Psoas muscle (tissue), 8 donors: ENCODE measurements at regions of chr12 and their contacts with region 1.

Region 1: GRCh38 chr12:45728630-45729232 is 775 bp upstream of the ARID2 start:
- DNase-seq: peak; percentile 96 to 98
- ATAC-seq: peak; percentile 79 to 86 (median 83)
- H3K4me3 ChIP-seq: peak overlapping the region; percentile 91
- H3K27ac ChIP-seq: peak overlapping the region; percentile 97
- H3K4me1 ChIP-seq: peaks cover 45% of the 10 kb centered on the region
- H3K27me3 ChIP-seq: no peaks in the 10 kb centered on the region
- CTCF ChIP-seq: peak; percentile 91

Region 2: GRCh38 chr12:45234139-45234846 is 494.4 kb before region 1 on chr12:
- intact Hi-C with region 1: loop called in 1 of 2 experiments (anchors 5 kb)
- DNase-seq: peak in 1 of 2 donors; percentile 38
- ATAC-seq: peak; percentile 73 to 79 (median 76)
- H3K4me3 ChIP-seq: peak overlapping the region; percentile 37
- H3K27ac ChIP-seq: peak overlapping the region; percentile 98
- H3K4me1 ChIP-seq: peaks cover 56% of the 10 kb centered on the region
- H3K27me3 ChIP-seq: no peaks in the 10 kb centered on the region
- CTCF ChIP-seq: no peak

Region 3: DNA sequence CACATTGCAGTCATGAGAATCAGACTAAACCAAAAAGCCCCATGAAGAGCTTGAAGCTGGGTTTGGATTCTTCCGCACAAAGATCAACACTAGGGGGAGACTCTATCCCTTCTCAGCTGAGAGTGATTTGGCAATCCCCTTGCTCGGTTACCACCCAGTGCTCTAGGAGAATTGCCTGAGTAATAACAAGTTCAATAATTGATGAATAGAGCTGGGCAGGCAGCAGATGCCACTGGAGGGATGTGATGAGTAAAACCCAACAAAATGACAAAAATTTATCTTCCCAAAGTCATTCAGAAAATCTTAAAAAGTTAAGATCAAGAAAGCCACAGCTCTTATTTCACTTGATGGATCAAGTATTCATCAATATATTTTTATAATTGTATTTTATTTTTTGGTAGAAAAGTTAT is 184.8 kb before region 1 on chr12:
- intact Hi-C with region 1: loop called (anchors 5 kb)
- DNase-seq: no peak
- ATAC-seq: peak; percentile 86 to 96 (median 90)
- H3K4me3 ChIP-seq: no peak overlapping the region
- H3K27ac ChIP-seq: no peak overlapping the region
- H3K4me1 ChIP-seq: no peaks in the 10 kb centered on the region
- H3K27me3 ChIP-seq: no peaks in the 10 kb centered on the region
- CTCF ChIP-seq: peak; percentile 83

Region 4: DNA sequence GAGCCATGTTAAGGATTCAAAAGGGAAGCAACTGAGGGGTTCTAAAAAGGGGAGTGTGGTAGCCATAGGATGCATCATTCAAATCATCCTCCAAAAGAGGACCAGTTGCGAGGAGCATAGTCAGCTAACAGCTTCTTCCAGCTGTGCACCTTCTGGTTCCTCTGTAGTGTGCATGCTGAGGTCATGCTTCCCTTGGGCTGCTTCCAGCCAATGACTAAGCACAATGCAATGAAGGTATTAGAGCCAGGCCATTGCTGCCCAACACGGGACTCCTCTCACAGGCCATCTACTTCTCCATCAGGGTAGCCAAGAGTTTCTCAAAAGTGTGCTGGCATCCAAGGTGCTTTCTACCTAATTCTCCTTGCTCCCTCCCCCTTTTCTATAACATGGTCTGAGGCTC is 68.4 kb before region 1 on chr12:
- intact Hi-C with region 1: no loop called
- DNase-seq: no peak
- ATAC-seq: peak in 3 of 4 donors; percentile 27 to 64 (median 58)
- H3K4me3 ChIP-seq: no peak overlapping the region
- H3K27ac ChIP-seq: no peak overlapping the region
- H3K4me1 ChIP-seq: no peaks in the 10 kb centered on the region
- H3K27me3 ChIP-seq: no peaks in the 10 kb centered on the region
- CTCF ChIP-seq: no peak

Region 5: GRCh38 chr12:45670346-45671065 is 58.2 kb before region 1 on chr12:
- intact Hi-C with region 1: loop called in 1 of 2 experiments (anchors 5 kb)
- DNase-seq: no peak
- ATAC-seq: peak in 1 of 4 donors; percentile 11
- H3K4me3 ChIP-seq: no peak overlapping the region
- H3K27ac ChIP-seq: peak overlapping the region; percentile 83
- H3K4me1 ChIP-seq: peaks cover 30% of the 10 kb centered on the region
- H3K27me3 ChIP-seq: no peaks in the 10 kb centered on the region
- CTCF ChIP-seq: no peak

Region 6: GRCh38 chr12:45781065-45781464 is 52.3 kb after region 1 on chr12:
- intact Hi-C with region 1: no loop called
- DNase-seq: no peak
- ATAC-seq: no peak
- H3K4me3 ChIP-seq: no peak overlapping the region
- H3K27ac ChIP-seq: no peak overlapping the region
- H3K4me1 ChIP-seq: peaks cover 10% of the 10 kb centered on the region
- H3K27me3 ChIP-seq: no peaks in the 10 kb centered on the region
- CTCF ChIP-seq: no peak